Endothelial cell of umbilical vein (primary cell): ENCODE measurements at regions of chr12 and their contacts with region 1.

Region 1: GRCh38 chr12:101830367-101831325 is at the start of gene GNPTAB:
- DNase-seq: peak; percentile 94
- H3K4me3 ChIP-seq: peak within 1 kb of the TSS; percentile 25 to 68 (median 58)
- H3K27ac ChIP-seq: no peak within 1 kb of the TSS
- H3K4me1 ChIP-seq: peaks cover 4% of the 10 kb centered on the region
- H3K27me3 ChIP-seq: no peaks in the 10 kb centered on the region
- CTCF ChIP-seq: peak; percentile 76 to 78
- POLR2A ChIP-seq: peak; percentile 26
- total RNA-seq, gene GNPTAB: 39.2 and 39.5 TPM in 2 replicates

Region 2: GRCh38 chr12:101501410-101501995 is 329.1 kb before region 1 on chr12:
- CTCF ChIA-PET with region 1: no interaction called
- POLR2A ChIA-PET with region 1: no interaction called
- dilution Hi-C with region 1: no loop called
- intact Hi-C with region 1: no loop called
- DNase-seq: no peak
- H3K4me3 ChIP-seq: no peak overlapping the region
- H3K27ac ChIP-seq: no peak overlapping the region
- H3K4me1 ChIP-seq: no peaks in the 10 kb centered on the region
- H3K27me3 ChIP-seq: no peaks in the 10 kb centered on the region
- CTCF ChIP-seq: no peak
- POLR2A ChIP-seq: no peak

Region 3: DNA sequence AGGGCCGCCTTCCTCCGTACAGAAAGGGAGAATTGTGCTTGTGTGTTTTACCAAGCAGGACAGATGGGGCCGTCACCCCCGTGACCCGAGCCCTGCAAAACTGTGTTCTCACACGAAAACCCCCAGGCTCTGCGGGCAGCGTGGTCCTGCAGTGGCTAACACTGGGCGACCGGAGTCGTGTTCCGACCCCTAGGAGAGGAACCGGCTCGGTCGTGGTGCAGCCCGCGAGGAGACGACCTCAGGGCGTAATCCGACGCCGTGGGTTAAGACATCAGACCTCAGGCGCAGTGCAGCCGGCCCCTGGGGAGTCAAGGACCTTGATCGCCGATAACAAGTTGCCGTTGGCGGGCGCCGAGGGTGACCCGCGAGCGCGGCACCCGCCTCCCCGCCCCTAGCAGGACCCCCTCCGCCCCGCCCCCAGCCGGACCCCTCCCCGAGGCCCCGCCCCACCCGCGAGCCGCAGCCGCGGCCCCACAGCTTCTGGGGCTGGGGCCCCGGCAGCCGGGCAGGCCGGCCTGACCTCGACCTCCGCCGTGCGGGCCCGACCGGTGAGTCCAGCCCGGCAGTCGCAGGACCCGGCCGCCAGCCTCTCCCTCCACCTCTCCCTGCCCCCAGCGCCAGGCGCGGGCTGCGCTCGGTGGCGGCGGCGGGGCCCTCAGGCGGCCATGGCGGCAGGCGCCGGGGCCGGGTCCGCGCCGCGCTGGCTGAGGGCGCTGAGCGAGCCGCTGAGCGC is 133.3 kb before region 1 on chr12 and contains the start of gene CHPT1:
- CTCF ChIA-PET with region 1: no interaction called
- POLR2A ChIA-PET with region 1: no interaction called
- dilution Hi-C with region 1: no loop called
- intact Hi-C with region 1: loop called (anchors 1 kb)
- DNase-seq: peak; percentile 50
- H3K4me3 ChIP-seq: peak within 1 kb of the TSS; percentile 72 to 82 (median 81)
- H3K27ac ChIP-seq: peak within 1 kb of the TSS; percentile 19
- H3K4me1 ChIP-seq: peaks cover 6% of the 10 kb centered on the region
- H3K27me3 ChIP-seq: no peaks in the 10 kb centered on the region
- CTCF ChIP-seq: no peak
- POLR2A ChIP-seq: no peak
- total RNA-seq, gene CHPT1: 19.3 and 25.3 TPM in 2 replicates

Region 4: DNA sequence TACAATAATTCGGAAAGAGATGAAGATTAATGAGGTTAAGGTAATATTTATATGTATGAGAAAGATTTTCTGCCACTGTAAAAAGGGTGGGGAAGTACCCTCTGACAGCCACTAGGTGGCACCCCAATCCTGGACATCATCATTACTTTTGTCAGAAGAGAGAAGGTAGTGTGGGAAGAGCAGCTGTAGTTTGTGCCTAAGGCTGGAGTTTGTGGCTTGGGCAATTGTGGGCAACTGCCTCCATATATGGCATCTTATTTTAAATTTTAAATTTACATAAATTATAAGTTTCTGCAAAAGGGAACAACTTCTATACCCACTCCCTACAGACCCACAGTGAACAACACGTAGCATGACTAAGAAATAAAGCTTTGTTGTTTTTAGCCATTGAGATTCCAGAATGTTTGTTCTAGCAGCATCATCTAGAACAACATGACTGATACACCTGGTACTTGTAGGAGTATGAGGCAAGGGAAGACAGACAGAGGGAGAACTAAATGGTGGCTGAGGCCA is 56.9 kb before region 1 on chr12:
- CTCF ChIA-PET with region 1: interaction called, 149 read pairs
- POLR2A ChIA-PET with region 1: interaction called, 5 read pairs
- dilution Hi-C with region 1: no loop called
- intact Hi-C with region 1: loop called (anchors 1 kb)
- DNase-seq: peak; percentile 71
- H3K4me3 ChIP-seq: no peak overlapping the region
- H3K27ac ChIP-seq: no peak overlapping the region
- H3K4me1 ChIP-seq: no peaks in the 10 kb centered on the region
- H3K27me3 ChIP-seq: no peaks in the 10 kb centered on the region
- CTCF ChIP-seq: peak; percentile 73 to 84
- POLR2A ChIP-seq: no peak

Region 5: GRCh38 chr12:101792051-101792931 is 38.4 kb before region 1 on chr12:
- CTCF ChIA-PET with region 1: interaction called, 25 read pairs
- POLR2A ChIA-PET with region 1: no interaction called
- dilution Hi-C with region 1: no loop called
- intact Hi-C with region 1: loop called (anchors 5 kb)
- DNase-seq: peak; percentile 18
- H3K4me3 ChIP-seq: no peak overlapping the region
- H3K27ac ChIP-seq: no peak overlapping the region
- H3K4me1 ChIP-seq: no peaks in the 10 kb centered on the region
- H3K27me3 ChIP-seq: no peaks in the 10 kb centered on the region
- CTCF ChIP-seq: peak in 1 of 2 donors; percentile 33
- POLR2A ChIP-seq: no peak

Region 6: DNA sequence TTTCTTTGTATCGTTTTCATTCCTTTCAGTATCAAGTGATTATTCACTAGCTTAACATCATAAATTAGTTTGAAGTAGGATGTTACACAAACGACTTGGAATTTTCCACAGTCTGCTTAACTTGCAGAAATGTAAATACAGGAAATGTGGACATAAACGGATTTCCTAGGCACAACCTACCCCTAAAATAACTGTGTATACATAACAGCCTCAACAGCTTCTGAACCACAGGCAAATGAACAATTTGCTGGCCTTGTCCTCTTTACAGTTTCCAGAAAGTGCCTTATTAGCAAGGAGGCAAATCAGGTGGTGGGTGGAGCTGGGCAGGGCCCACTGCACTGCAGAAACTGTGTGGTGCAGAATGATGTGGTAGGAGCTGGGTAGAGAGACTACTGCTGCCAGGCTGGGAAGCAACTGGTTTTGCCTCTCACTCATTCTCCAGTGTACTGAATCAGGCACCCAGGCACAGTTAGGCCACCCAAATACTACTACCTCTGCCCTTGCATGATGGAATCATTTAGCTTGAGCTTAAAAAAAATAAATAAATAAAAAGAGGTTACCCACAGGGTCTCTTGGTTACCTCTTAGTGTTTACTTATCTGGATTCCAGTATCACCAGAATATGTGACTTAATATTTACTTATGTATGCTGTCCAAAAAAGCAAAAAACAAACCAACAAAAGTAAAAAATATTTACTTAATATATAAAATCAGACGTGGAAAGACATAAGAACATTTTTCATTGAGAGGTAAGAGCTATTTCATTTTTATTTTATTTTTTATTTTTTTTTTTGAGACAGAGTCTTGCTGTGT is 61.0 kb after region 1 on chr12:
- CTCF ChIA-PET with region 1: interaction called, 10 read pairs
- POLR2A ChIA-PET with region 1: no interaction called
- dilution Hi-C with region 1: no loop called
- intact Hi-C with region 1: no loop called
- DNase-seq: peak; percentile 95
- H3K4me3 ChIP-seq: peak overlapping the region in 1 of 3 experiments; percentile 31
- H3K27ac ChIP-seq: peak overlapping the region; percentile 56
- H3K4me1 ChIP-seq: peaks cover 40% of the 10 kb centered on the region
- H3K27me3 ChIP-seq: no peaks in the 10 kb centered on the region
- CTCF ChIP-seq: no peak
- POLR2A ChIP-seq: no peak